Activated CD4-positive, alpha-beta memory T cell treated with anti-CD3 and anti-CD28 coated beads, Interleukin-2, amount 10 ng/mL, durations not matched to agents 7 days and 5 days (primary cell): ENCODE measurements at regions of chr1 and their contacts with region 1.

Region 1: DNA sequence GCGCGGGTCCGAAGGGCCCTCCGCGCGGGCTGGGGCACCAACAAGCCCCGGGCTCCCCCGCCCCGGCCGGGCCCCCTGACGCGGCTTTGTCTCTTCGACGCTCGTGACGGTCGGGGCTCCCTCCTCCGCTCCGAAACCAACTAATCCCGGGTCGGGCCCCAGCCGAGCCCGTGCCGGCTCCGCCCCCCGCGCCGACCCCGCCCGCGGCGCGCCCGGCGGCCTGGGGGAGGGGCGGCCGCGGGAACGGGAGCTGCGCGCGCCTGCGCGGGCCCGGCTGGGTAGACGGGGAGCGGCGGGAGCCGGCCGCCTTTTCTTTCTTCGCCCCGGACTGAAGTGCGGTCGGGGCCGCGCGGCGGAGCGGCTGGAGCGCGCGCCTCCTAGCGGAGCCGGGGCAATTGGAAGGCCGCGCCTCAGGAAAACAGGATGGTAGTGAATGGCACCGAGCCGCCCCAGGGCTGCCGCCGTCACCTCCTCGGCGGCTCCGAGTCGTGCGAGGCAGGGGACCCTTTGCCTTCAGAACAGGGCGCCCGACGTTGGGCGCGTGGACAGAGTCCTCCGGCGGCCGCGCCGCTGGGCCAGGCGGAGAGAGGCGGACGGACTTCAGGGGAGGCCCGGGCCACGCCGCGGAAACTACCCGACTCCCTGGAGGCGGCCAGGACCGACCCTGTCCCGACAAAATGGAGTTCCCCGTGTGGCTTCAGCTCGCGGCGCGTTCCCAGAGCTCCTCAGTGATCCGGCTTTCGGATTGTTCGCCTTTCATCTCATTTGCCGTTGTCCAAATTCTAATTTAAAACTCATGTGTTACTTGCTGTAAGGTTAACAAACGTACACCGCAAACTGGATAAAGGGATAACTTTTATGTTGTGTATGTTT is at the start of gene TP53BP2:
- DNase-seq: peak; percentile 83
- H3K4me3 Mint-ChIP-seq: peak within 1 kb of the TSS; percentile 98
- H3K27ac Mint-ChIP-seq: peak within 1 kb of the TSS; percentile 98
- H3K4me1 Mint-ChIP-seq: peaks cover 38% of the 10 kb centered on the region
- H3K27me3 Mint-ChIP-seq: peaks cover 1% of the 10 kb centered on the region
- total RNA-seq, gene TP53BP2: 34.4 to 36.0 TPM

Region 2: GRCh38 chr1:223678841-223679240 is 167.2 kb before region 1 on chr1:
- CTCF ChIA-PET with region 1: no interaction called
- POLR2A ChIA-PET with region 1: no interaction called
- DNase-seq: no peak
- H3K4me3 Mint-ChIP-seq: no peak overlapping the region
- H3K27ac Mint-ChIP-seq: no peak overlapping the region
- H3K4me1 Mint-ChIP-seq: no peaks in the 10 kb centered on the region
- H3K27me3 Mint-ChIP-seq: peaks cover 10% of the 10 kb centered on the region

Region 3: GRCh38 chr1:223712194-223712849 is 133.7 kb before region 1 on chr1 and contains the start of gene CAPN2:
- CTCF ChIA-PET with region 1: no interaction called
- POLR2A ChIA-PET with region 1: interaction called, 14 read pairs
- DNase-seq: peak; percentile 75
- H3K4me3 Mint-ChIP-seq: peak within 1 kb of the TSS; percentile 85
- H3K27ac Mint-ChIP-seq: peak within 1 kb of the TSS; percentile 95
- H3K4me1 Mint-ChIP-seq: peaks cover 57% of the 10 kb centered on the region
- H3K27me3 Mint-ChIP-seq: peaks cover 6% of the 10 kb centered on the region
- total RNA-seq, gene CAPN2: 263 TPM

Region 4: DNA sequence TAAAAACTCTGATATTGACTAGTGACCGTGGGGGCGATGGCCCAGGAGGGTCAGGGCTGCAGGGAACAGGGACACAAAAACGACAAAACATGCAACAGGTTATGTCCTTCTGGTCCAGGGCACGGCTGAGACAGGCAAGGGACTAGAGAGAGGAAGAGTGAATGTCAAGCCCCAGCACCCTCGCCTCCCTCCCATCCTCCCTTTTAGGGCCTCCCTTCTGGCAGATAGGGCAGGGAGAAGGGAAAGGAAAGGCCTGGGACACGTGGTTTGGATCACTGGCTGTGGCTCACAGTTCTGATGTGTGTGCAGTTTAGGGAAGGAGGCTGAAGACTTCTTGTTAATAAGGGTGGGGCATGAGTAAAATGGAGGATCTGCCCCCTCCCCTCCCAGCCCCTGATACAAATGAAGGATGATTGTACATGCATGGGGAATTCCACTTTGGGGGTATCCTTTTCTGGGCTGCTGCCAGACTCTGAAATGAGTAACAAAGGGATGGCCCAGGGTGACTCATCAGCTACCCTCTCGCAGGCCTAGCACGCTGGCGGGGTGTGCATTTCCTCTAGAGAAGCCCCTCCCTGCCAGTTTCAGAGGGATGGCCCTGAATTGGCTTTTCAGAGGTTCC is 119.6 kb before region 1 on chr1:
- CTCF ChIA-PET with region 1: no interaction called
- POLR2A ChIA-PET with region 1: interaction called, 13 read pairs
- DNase-seq: peak; percentile 88
- H3K4me3 Mint-ChIP-seq: peak overlapping the region; percentile 69
- H3K27ac Mint-ChIP-seq: peak overlapping the region; percentile 89
- H3K4me1 Mint-ChIP-seq: peaks cover 81% of the 10 kb centered on the region
- H3K27me3 Mint-ChIP-seq: no peaks in the 10 kb centered on the region

Region 5: DNA sequence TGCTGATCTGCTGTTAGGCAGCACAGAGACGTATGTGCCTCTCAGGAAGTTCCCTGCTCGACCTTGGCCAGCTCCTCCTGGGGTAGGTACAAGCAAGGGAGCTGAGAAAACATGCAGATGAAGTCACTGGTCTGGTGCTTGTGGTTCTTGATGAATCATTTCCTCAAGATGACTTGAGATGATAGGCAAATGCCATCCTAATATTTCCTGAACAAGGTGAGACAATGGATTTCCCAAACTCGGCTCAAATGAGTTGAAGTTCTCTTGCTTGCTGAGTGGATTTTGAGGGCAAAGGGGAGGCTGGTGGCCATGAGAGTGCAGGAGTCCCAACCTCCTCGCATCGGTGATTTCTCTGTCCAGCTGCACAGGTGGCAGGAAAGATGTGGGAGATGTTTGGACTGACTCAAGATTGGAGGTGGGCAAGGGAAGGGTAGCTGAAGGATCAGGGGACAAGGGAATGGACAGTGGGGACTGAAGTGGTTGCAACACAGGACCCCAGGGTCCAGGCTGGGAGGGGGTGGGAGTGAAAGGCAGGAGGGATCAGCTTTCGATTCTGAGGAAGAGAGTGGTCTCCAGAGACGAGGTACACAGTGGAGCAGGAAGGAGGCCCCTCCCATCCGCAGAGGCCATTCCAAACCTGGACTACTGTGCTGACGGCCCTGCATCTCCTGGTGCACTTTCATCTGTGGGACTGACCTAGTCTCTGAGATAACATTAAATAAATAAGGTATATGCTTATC is 69.8 kb before region 1 on chr1:
- CTCF ChIA-PET with region 1: interaction called, 3 read pairs
- POLR2A ChIA-PET with region 1: interaction called, 17 read pairs
- DNase-seq: peak; percentile 60
- H3K4me3 Mint-ChIP-seq: no peak overlapping the region
- H3K27ac Mint-ChIP-seq: peak overlapping the region; percentile 63
- H3K4me1 Mint-ChIP-seq: peaks cover 41% of the 10 kb centered on the region
- H3K27me3 Mint-ChIP-seq: no peaks in the 10 kb centered on the region

Region 6: DNA sequence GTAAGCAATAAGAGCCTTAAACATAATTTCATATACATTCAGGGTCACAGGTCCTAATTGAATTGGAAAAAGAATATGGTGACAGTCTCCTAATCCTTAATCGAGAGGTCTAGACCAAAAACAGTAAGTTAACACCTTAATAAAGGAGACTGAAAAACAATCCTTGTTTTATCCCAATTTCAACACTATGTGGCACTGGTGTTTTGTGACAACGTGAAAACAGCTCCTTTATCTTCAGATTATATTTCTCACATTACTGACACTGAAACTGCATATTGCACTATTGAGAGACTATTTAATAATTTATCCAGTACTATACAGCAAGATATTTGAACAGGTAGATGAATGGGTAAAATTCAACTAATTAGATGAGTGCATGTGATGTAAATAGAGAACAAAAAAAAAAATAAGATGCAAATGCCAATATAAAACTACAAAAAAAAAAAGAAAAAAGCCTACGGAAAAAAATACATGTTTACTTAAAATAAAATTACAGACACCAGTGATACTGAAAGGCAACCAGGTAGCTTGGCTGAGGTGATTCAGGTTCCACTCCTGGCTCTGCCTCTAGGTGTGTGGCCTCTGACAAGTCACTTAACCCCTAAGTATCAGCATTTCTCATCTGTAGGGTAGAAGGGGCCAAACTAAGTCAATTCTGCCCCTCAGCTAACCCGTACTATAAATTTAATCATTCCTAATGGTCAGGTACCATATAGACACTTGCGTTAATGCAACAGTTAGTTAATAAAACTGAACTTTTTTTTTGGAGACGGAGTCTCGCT is 34.2 kb before region 1 on chr1:
- CTCF ChIA-PET with region 1: interaction called, 3 read pairs
- POLR2A ChIA-PET with region 1: interaction called, 19 read pairs
- DNase-seq: no peak
- H3K4me3 Mint-ChIP-seq: no peak overlapping the region
- H3K27ac Mint-ChIP-seq: no peak overlapping the region
- H3K4me1 Mint-ChIP-seq: peaks cover 15% of the 10 kb centered on the region
- H3K27me3 Mint-ChIP-seq: no peaks in the 10 kb centered on the region

Region 7: GRCh38 chr1:223831755-223832636 is 14.1 kb before region 1 on chr1:
- CTCF ChIA-PET with region 1: interaction called, 12 read pairs
- POLR2A ChIA-PET with region 1: interaction called, 96 read pairs
- DNase-seq: no peak
- H3K4me3 Mint-ChIP-seq: peak overlapping the region; percentile 6
- H3K27ac Mint-ChIP-seq: peak overlapping the region; percentile 70
- H3K4me1 Mint-ChIP-seq: peaks cover 30% of the 10 kb centered on the region
- H3K27me3 Mint-ChIP-seq: no peaks in the 10 kb centered on the region